ENCODE measurements at regions of chr16 and their contacts with region 1.

Region 1: GRCh38 chr16:48623304-48624016 is 13.5 kb upstream of the N4BP1 start:
- DNase-seq: peak; percentile 82 to 93 (median 87)
- ATAC-seq: peak; percentile 92 to 97 (median 94)
- H3K4me3 ChIP-seq: peak overlapping the region; percentile 6 to 65 (median 52)
- H3K27ac ChIP-seq: peak overlapping the region in 11 of 12 donors; percentile 9 to 86 (median 60)
- H3K4me1 ChIP-seq: peaks cover 0 to 54% (median 23%) of the 10 kb centered on the region in 12 donors
- H3K27me3 ChIP-seq: no peaks in the 10 kb centered on the region
- CTCF ChIP-seq: peak; percentile 95 to 100 (median 99)
- POLR2A ChIP-seq: no peak

Region 2: DNA sequence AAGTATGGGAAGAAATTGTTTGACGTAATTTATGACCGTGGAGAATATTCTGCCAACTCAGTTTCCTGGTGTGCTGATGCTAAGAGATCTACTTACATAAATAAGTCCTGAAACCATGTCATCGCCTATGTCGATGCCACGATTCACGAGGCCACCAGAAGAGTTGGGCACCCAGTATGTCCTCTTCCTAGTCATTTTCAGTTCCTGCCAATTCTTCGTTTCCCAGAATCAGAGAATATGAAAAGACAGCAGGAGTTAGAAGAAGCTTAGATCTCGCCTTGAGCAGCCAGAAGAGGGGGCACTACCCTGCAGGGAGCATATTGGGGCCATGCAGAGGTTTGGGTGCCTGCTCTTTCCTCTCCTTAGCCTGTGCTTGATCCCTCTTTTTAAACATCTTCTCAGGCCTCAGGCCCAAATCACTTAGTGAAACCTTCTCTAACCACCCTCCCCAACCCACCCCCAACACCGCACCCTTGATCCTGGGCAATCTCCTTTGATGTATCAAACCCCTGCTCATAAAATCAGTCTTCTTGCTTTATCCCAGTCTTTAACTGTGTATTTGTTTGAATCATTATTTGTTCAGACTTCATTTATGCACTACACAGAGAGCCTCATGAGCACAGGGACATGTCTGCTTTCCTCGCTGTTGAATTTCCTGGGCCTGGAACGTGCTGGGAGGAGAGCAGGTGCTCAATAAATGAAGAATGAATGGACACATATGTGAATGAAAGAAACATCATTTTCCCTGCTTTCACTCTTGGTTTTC is 391.6 kb before region 1 on chr16:
- intact Hi-C with region 1: loop called in 6 of 10 experiments (anchors 5 to 10 kb)
- DNase-seq: no peak
- ATAC-seq: peak in 2 of 4 donors; percentile 53 to 65
- H3K4me3 ChIP-seq: no peak overlapping the region
- H3K27ac ChIP-seq: no peak overlapping the region
- H3K4me1 ChIP-seq: peaks cover 0 to 11% (median 0%) of the 10 kb centered on the region in 12 donors
- H3K27me3 ChIP-seq: no peaks in the 10 kb centered on the region
- CTCF ChIP-seq: peak in 8 of 12 donors; percentile 21 to 48 (median 33)
- POLR2A ChIP-seq: no peak

Region 3: DNA sequence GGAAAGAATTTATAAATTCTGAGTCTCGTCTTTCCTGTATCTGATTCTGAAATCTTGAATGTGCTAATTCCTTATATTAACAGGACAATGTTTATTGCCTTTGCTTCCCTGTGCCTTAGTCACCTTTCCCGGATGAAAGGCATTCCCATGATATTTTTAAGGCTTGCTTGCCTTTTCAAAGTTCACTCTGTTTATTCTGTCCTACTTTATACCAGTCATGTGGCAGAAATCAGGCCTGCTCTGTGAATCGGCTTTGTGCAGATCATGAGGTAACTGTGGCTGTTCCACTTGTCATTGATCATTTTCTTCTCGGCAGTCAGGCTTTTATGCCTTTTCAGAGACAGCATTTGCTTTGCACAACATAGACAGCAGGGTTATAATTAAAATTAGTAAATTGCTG is 347.4 kb before region 1 on chr16:
- intact Hi-C with region 1: loop called in 1 of 10 experiments (anchors 10 kb)
- DNase-seq: no peak
- ATAC-seq: peak in 2 of 4 donors; percentile 17 to 42
- H3K4me3 ChIP-seq: no peak overlapping the region
- H3K27ac ChIP-seq: peak overlapping the region in 9 of 12 donors; percentile 1 to 45 (median 17)
- H3K4me1 ChIP-seq: peaks cover 6 to 63% (median 34%) of the 10 kb centered on the region in 12 donors
- H3K27me3 ChIP-seq: no peaks in the 10 kb centered on the region
- CTCF ChIP-seq: no peak
- POLR2A ChIP-seq: no peak

Region 4: GRCh38 chr16:48373258-48374029 is 250.0 kb before region 1 on chr16:
- intact Hi-C with region 1: loop called in 1 of 10 experiments (anchors 5 kb)
- DNase-seq: no peak
- ATAC-seq: peak in 3 of 4 donors; percentile 41 to 64 (median 54)
- H3K4me3 ChIP-seq: no peak overlapping the region
- H3K27ac ChIP-seq: no peak overlapping the region
- H3K4me1 ChIP-seq: peaks cover 2 to 85% (median 75%) of the 10 kb centered on the region in 12 donors
- H3K27me3 ChIP-seq: no peaks in the 10 kb centered on the region
- CTCF ChIP-seq: no peak
- POLR2A ChIP-seq: no peak

Region 5: GRCh38 chr16:48446539-48446930 is 176.9 kb before region 1 on chr16:
- intact Hi-C with region 1: loop called in 1 of 10 experiments (anchors 5 kb)
- DNase-seq: no peak
- ATAC-seq: no peak
- H3K4me3 ChIP-seq: no peak overlapping the region
- H3K27ac ChIP-seq: no peak overlapping the region
- H3K4me1 ChIP-seq: peaks cover 0 to 20% (median 13%) of the 10 kb centered on the region in 12 donors
- H3K27me3 ChIP-seq: no peaks in the 10 kb centered on the region
- CTCF ChIP-seq: no peak
- POLR2A ChIP-seq: no peak

Region 6: GRCh38 chr16:48542020-48542473 is 81.4 kb before region 1 on chr16:
- intact Hi-C with region 1: loop called (anchors 2 to 10 kb)
- DNase-seq: peak; percentile 46 to 72 (median 62)
- ATAC-seq: peak; percentile 56 to 77 (median 65)
- H3K4me3 ChIP-seq: no peak overlapping the region
- H3K27ac ChIP-seq: peak overlapping the region in 2 of 12 donors; percentile 19 to 47
- H3K4me1 ChIP-seq: peaks cover 2 to 54% (median 28%) of the 10 kb centered on the region in 12 donors
- H3K27me3 ChIP-seq: no peaks in the 10 kb centered on the region
- CTCF ChIP-seq: peak; percentile 34 to 70 (median 58)
- POLR2A ChIP-seq: no peak

Region 7: GRCh38 chr16:48704710-48705109 is 81.2 kb after region 1 on chr16:
- intact Hi-C with region 1: no loop called
- DNase-seq: no peak
- ATAC-seq: no peak
- H3K4me3 ChIP-seq: no peak overlapping the region
- H3K27ac ChIP-seq: no peak overlapping the region
- H3K4me1 ChIP-seq: no peaks in the 10 kb centered on the region
- H3K27me3 ChIP-seq: no peaks in the 10 kb centered on the region
- CTCF ChIP-seq: no peak
- POLR2A ChIP-seq: no peak

Measured in heart left ventricle (tissue), 16 donors.